A549 (cell line): ENCODE measurements at regions of chr12 and their contacts with region 1.

Region 1: GRCh38 chr12:69885658-69886057 is 60.6 kb downstream of the MYRFL start:
- DNase-seq: no peak
- ATAC-seq: no peak
- H3K4me3 ChIP-seq: no peak overlapping the region
- H3K27ac ChIP-seq: no peak overlapping the region
- H3K4me1 ChIP-seq: no peaks in the 10 kb centered on the region
- CTCF ChIP-seq: no peak
- EP300 ChIP-seq: no peak
- POLR2A ChIP-seq: no peak
- RAD21 ChIP-seq: no peak

Region 2: GRCh38 chr12:69900720-69901131 is 15.1 kb after region 1 on chr12:
- CTCF ChIA-PET with region 1: interaction called, 47 read pairs
- POLR2A ChIA-PET with region 1: no interaction called
- DNase-seq: peak; percentile 31 to 64
- ATAC-seq: peak; percentile 81 to 84; a peak in 5 of 6 replicates
- H3K4me3 ChIP-seq: no peak overlapping the region
- H3K27ac ChIP-seq: no peak overlapping the region
- H3K4me1 ChIP-seq: no peaks in the 10 kb centered on the region
- CTCF ChIP-seq: peak; percentile 92
- EP300 ChIP-seq: no peak
- POLR2A ChIP-seq: no peak
- RAD21 ChIP-seq: peak; percentile 92 to 94